Heart right ventricle (tissue), 16 donors: ENCODE measurements at regions of chr1 and their contacts with region 1.

Region 1: DNA sequence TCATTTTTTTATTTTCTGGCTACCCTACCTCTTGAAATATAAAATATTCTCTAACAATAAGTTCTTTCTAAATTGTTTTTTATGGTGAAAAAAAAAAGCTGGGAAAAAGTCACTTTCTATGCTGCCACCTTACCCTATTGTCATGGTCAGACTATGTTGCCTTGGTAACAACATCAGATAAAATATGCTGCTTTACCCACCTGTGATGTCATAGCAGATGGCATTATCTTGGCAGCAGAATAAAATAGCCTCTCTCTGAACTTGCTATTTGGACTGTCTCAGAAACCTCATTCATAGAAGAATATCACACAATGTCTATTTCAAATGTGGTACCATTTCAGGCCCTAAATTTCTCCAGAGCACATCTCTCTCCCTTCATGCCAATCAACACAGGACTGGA is 69.6 kb upstream of the SGIP1 start:
- DNase-seq: no peak
- ATAC-seq: no peak
- H3K4me3 ChIP-seq: no peak overlapping the region
- H3K27ac ChIP-seq: no peak overlapping the region
- H3K4me1 ChIP-seq: no peaks in the 10 kb centered on the region
- H3K27me3 ChIP-seq: no peaks in the 10 kb centered on the region
- CTCF ChIP-seq: no peak

Region 2: DNA sequence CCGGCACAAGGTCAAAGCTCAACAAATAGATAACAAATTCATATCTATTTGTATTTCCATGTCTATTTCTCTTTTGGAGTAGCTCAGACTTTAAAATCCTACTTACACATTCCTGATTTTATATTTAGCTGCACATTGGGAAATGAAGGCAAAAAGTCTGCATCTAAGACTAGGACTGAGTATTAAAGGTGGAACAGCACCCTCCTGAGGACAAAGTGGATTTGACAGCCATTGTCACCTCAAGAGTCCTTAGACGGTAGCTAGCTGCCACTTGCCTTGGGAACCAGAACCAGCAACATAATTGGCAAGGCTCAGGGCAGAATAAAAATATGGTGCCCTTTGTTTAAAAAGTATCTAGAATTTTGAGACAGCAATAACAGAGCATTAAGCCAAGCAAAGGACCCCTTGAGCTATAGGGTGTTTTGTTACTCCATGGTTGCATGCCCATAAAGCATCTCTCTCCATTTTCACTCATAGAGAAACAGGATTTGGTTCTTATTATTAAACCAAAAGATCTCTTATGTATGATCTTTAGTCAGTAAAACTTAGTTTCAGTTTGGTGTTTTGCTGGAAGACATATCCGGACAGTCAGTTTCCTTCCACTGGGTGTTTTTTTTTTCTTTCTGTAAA is 39.6 kb after region 1 on chr1:
- intact Hi-C with region 1: loop called in 1 of 10 experiments (anchors 1 kb)
- DNase-seq: peak in 1 of 2 donors; percentile 64
- ATAC-seq: peak; percentile 64 to 93 (median 78)
- H3K4me3 ChIP-seq: no peak overlapping the region
- H3K27ac ChIP-seq: peak overlapping the region in 1 of 10 donors; percentile 8
- H3K4me1 ChIP-seq: peaks cover 0 to 10% (median 0%) of the 10 kb centered on the region in 9 donors
- H3K27me3 ChIP-seq: no peaks in the 10 kb centered on the region
- CTCF ChIP-seq: peak; percentile 25 to 80 (median 71)